GM12878 (cell line): ENCODE measurements at regions of chr3 and their contacts with region 1.

Region 1: GRCh38 chr3:101573449-101574387 is at the start of gene PCNP:
- DNase-seq: peak; percentile 94
- ATAC-seq: peak; percentile 87
- H3K4me3 ChIP-seq: peak within 1 kb of the TSS; percentile 84
- H3K27ac ChIP-seq: peak within 1 kb of the TSS; percentile 88
- H3K4me1 ChIP-seq: peaks cover 7% of the 10 kb centered on the region
- H3K27me3 ChIP-seq: no peaks in the 10 kb centered on the region
- CTCF ChIP-seq: peak; percentile 70 to 88 (median 84)
- EP300 ChIP-seq: no peak
- POLR2A ChIP-seq: peak; percentile 96
- RAD21 ChIP-seq: peak; percentile 68
- polyA plus RNA-seq, gene PCNP: 101 to 142 TPM

Region 2: GRCh38 chr3:101512646-101513418 is 60.9 kb before region 1 on chr3 and contains the start of gene SENP7:
- CTCF ChIA-PET with region 1: interaction called, 4 read pairs
- POLR2A ChIA-PET with region 1: interaction called, 6 read pairs
- RAD21 ChIA-PET with region 1: interaction called, 3 read pairs
- SMC1A ChIA-PET with region 1: interaction called, 3 read pairs
- in situ Hi-C with region 1: no loop called
- intact Hi-C with region 1: loop called (anchors 1 kb)
- DNase-seq: peak; percentile 48
- ATAC-seq: peak; percentile 79
- H3K4me3 ChIP-seq: peak within 1 kb of the TSS; percentile 97
- H3K27ac ChIP-seq: peak within 1 kb of the TSS; percentile 97
- H3K4me1 ChIP-seq: no peaks in the 10 kb centered on the region
- H3K27me3 ChIP-seq: no peaks in the 10 kb centered on the region
- CTCF ChIP-seq: no peak
- EP300 ChIP-seq: no peak
- POLR2A ChIP-seq: peak; percentile 6; the same call in 1 of the 2 replicates
- RAD21 ChIP-seq: no peak
- polyA plus RNA-seq, gene SENP7: 2.6 to 2.8 TPM

Region 3: DNA sequence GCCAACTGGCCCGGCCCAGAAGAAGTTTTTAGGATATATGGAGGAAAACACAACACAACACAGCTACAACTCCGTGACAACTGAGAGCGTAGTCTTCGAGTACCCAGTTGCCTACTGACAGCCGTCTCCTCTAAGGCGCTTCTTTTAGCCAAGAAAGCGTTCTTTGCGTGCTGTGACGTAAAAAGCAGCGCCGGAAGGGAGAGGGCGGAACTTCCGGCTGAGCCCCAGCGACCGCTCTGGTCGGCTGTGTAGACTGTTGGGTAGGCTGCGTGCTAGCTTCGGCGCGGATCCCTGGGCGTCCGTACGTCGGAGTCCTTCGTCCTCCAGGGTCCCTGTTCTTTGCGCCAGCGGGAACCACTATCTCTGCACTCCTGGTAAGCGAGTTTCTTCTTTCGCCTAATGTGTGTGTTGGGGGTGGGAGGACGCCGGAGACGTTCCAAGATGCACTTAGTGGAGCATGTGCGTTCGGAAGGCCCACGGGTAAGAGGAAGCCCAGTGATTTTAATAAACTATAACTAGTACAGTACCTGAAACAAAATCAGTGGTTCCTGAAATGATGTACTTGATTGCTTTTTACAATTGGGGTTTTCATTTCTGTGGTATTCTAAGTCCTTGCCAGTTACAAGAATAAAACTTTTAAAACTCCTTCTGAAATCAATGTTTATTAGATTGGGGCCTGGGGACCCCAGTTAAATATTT is 11.9 kb before region 1 on chr3 and contains the start of gene TRMT10C:
- CTCF ChIA-PET with region 1: interaction called, 18 read pairs
- POLR2A ChIA-PET with region 1: interaction called, 13 read pairs
- RAD21 ChIA-PET with region 1: interaction called, 11 read pairs
- SMC1A ChIA-PET with region 1: interaction called, 6 read pairs
- in situ Hi-C with region 1: no loop called
- intact Hi-C with region 1: loop called (anchors 2 kb)
- DNase-seq: peak; percentile 74
- ATAC-seq: peak; percentile 98
- H3K4me3 ChIP-seq: peak within 1 kb of the TSS; percentile 89
- H3K27ac ChIP-seq: peak within 1 kb of the TSS; percentile 80
- H3K4me1 ChIP-seq: peaks cover 3% of the 10 kb centered on the region
- H3K27me3 ChIP-seq: no peaks in the 10 kb centered on the region
- CTCF ChIP-seq: no peak
- EP300 ChIP-seq: no peak
- POLR2A ChIP-seq: peak; percentile 97
- RAD21 ChIP-seq: no peak
- polyA plus RNA-seq, gene TRMT10C: 76.9 to 82.1 TPM

Region 4: DNA sequence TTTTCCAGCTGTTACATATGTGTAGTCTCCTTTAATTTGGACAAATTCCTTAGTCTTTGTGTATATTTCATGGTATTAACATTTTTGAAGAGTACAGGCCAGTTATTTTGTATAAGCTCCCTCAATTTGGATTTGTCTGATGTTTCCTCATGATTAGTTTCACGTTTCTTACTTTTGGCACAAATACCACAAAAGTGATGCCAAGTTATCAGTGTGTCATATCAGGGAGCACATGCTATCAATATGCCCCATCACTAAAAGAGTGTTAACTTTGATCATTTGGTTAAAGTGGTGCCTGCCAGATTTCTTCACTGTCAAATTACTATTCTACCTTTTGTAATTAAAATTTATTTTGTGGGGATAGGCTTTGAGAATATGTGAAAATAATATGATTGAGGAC is 14.9 kb after region 1 on chr3:
- CTCF ChIA-PET with region 1: interaction called, 5 read pairs
- POLR2A ChIA-PET with region 1: interaction called, 7 read pairs
- RAD21 ChIA-PET with region 1: interaction called, 5 read pairs
- SMC1A ChIA-PET with region 1: interaction called, 11 read pairs
- in situ Hi-C with region 1: no loop called
- intact Hi-C with region 1: no loop called
- DNase-seq: no peak
- ATAC-seq: no peak
- H3K4me3 ChIP-seq: no peak overlapping the region
- H3K27ac ChIP-seq: no peak overlapping the region
- H3K4me1 ChIP-seq: no peaks in the 10 kb centered on the region
- H3K27me3 ChIP-seq: no peaks in the 10 kb centered on the region
- CTCF ChIP-seq: no peak
- EP300 ChIP-seq: no peak
- POLR2A ChIP-seq: no peak
- RAD21 ChIP-seq: no peak

Region 5: GRCh38 chr3:101635954-101636798 is 62.5 kb after region 1 on chr3:
- CTCF ChIA-PET with region 1: interaction called, 22 read pairs
- POLR2A ChIA-PET with region 1: no interaction called
- RAD21 ChIA-PET with region 1: interaction called, 5 read pairs
- SMC1A ChIA-PET with region 1: interaction called, 3 read pairs
- in situ Hi-C with region 1: no loop called
- intact Hi-C with region 1: loop called (anchors 1 kb)
- DNase-seq: peak; percentile 11
- ATAC-seq: peak; percentile 98
- H3K4me3 ChIP-seq: no peak overlapping the region
- H3K27ac ChIP-seq: no peak overlapping the region
- H3K4me1 ChIP-seq: no peaks in the 10 kb centered on the region; the same call in 1 of the 2 replicates
- H3K27me3 ChIP-seq: no peaks in the 10 kb centered on the region; a peak in 1 of 4 replicates
- CTCF ChIP-seq: peak; percentile 63 to 67 (median 65)
- EP300 ChIP-seq: no peak
- POLR2A ChIP-seq: no peak
- RAD21 ChIP-seq: peak; percentile 68

Region 6: GRCh38 chr3:101676765-101677435 is 103.2 kb after region 1 on chr3 and contains the start of gene ZBTB11:
- CTCF ChIA-PET with region 1: interaction called, 6 read pairs
- POLR2A ChIA-PET with region 1: interaction called, 16 read pairs
- RAD21 ChIA-PET with region 1: interaction called, 10 read pairs
- SMC1A ChIA-PET with region 1: interaction called, 5 read pairs
- in situ Hi-C with region 1: no loop called
- intact Hi-C with region 1: loop called (anchors 1 kb)
- DNase-seq: peak; percentile 99
- ATAC-seq: peak; percentile 87
- H3K4me3 ChIP-seq: peak within 1 kb of the TSS; percentile 78
- H3K27ac ChIP-seq: peak within 1 kb of the TSS; percentile 86
- H3K4me1 ChIP-seq: no peaks in the 10 kb centered on the region
- H3K27me3 ChIP-seq: no peaks in the 10 kb centered on the region
- CTCF ChIP-seq: peak; percentile 9 to 55 (median 35); a peak in 3 of 6 replicates
- EP300 ChIP-seq: 0 out of 4 replicates have a peak, but pooled peaks of 1 of the 2 experiments have one; percentile 14
- POLR2A ChIP-seq: peak; percentile 78
- RAD21 ChIP-seq: no peak
- polyA plus RNA-seq, gene ZBTB11: 3.5 to 5.0 TPM

Region 7: DNA sequence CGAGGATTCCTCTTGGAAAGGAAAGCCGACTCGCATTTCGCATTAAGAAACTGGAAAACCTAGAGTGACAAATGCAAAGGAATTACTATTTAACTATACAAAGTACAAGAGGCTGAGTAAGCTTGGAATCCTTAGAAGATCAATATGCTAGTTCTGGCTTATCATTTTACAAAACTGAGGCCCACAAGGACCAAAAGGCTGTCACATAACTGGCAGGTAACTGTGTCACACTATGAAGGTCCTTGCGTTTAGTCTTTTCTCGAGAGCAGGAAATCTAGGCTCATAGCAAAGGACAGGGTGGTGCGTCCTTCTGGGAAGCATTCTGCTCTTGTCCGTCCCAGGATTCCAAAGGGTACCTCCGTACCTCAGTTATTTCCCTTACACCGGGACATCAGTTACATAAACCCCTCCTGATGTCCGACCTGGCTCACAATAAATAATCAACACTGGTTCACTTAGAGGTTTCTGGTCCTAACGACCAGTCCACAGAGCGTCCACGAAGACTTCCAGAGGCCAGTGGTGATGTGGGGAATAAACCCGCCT is 112.2 kb after region 1 on chr3:
- CTCF ChIA-PET with region 1: interaction called, 3 read pairs
- POLR2A ChIA-PET with region 1: interaction called, 10 read pairs
- RAD21 ChIA-PET with region 1: interaction called, 6 read pairs
- SMC1A ChIA-PET with region 1: no interaction called
- in situ Hi-C with region 1: no loop called
- intact Hi-C with region 1: no loop called
- DNase-seq: no peak
- ATAC-seq: peak; percentile 22
- H3K4me3 ChIP-seq: peak overlapping the region; percentile 76
- H3K27ac ChIP-seq: peak overlapping the region; percentile 76
- H3K4me1 ChIP-seq: peaks cover 10% of the 10 kb centered on the region
- H3K27me3 ChIP-seq: no peaks in the 10 kb centered on the region
- CTCF ChIP-seq: no peak
- EP300 ChIP-seq: no peak
- POLR2A ChIP-seq: no peak
- RAD21 ChIP-seq: no peak